Thyroid gland (tissue), 4 donors: ENCODE measurements at regions of chr10 and their contacts with region 1.

Region 1: GRCh38 chr10:71383972-71384687 is 12.6 kb upstream of the CDH23 start:
- DNase-seq: peak; percentile 71 to 73
- H3K4me3 ChIP-seq: no peak overlapping the region
- H3K27ac ChIP-seq: no peak overlapping the region
- H3K4me1 ChIP-seq: peaks cover 0 to 7% of the 10 kb centered on the region in 2 donors
- H3K27me3 ChIP-seq: no peaks in the 10 kb centered on the region
- CTCF ChIP-seq: peak; percentile 70 to 95 (median 83)
- POLR2A ChIP-seq: no peak

Region 2: GRCh38 chr10:71319042-71319799 is 64.9 kb before region 1 on chr10 and contains the start of gene SLC29A3:
- intact Hi-C with region 1: no loop called
- DNase-seq: peak; percentile 85
- H3K4me3 ChIP-seq: peak within 1 kb of the TSS; percentile 67 to 70 (median 69)
- H3K27ac ChIP-seq: peak within 1 kb of the TSS; percentile 77 to 80 (median 78)
- H3K4me1 ChIP-seq: peaks cover 14 to 32% of the 10 kb centered on the region in 2 donors
- H3K27me3 ChIP-seq: no peaks in the 10 kb centered on the region
- CTCF ChIP-seq: peak; percentile 20 to 79 (median 68)
- POLR2A ChIP-seq: peak in 1 of 2 donors; percentile 76
- total RNA-seq, gene SLC29A3: 5.1 to 8.2 (median 6.7) TPM

Region 3: DNA sequence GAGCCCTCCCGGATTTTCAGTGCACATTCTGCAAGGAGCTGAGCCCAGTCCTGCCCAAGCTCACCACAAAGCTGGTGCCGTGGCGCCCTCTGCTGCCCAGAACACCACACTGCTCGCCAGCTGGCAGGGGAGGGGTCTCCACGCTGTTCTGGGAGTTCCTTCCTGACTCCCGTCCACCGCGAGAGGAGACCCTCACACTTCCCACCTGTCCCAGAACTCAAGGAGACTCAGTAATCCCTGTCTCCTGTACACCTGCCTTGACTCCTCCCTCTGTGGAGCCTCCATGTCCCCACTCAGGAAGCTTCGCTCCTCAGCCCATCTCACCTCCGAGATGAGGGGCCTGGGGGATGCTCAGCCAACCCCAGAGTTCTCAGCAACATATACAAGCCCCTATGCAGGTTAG is 324.2 kb after region 1 on chr10:
- intact Hi-C with region 1: loop called (anchors 5 kb)
- DNase-seq: peak; percentile 48 to 52
- H3K4me3 ChIP-seq: no peak overlapping the region
- H3K27ac ChIP-seq: no peak overlapping the region
- H3K4me1 ChIP-seq: peaks cover 3 to 8% of the 10 kb centered on the region in 2 donors
- H3K27me3 ChIP-seq: no peaks in the 10 kb centered on the region
- CTCF ChIP-seq: peak; percentile 48 to 92 (median 74)
- POLR2A ChIP-seq: no peak